WTC11 (cell line): ENCODE measurements at regions of chr10 and their contacts with region 1.

Region 1: DNA sequence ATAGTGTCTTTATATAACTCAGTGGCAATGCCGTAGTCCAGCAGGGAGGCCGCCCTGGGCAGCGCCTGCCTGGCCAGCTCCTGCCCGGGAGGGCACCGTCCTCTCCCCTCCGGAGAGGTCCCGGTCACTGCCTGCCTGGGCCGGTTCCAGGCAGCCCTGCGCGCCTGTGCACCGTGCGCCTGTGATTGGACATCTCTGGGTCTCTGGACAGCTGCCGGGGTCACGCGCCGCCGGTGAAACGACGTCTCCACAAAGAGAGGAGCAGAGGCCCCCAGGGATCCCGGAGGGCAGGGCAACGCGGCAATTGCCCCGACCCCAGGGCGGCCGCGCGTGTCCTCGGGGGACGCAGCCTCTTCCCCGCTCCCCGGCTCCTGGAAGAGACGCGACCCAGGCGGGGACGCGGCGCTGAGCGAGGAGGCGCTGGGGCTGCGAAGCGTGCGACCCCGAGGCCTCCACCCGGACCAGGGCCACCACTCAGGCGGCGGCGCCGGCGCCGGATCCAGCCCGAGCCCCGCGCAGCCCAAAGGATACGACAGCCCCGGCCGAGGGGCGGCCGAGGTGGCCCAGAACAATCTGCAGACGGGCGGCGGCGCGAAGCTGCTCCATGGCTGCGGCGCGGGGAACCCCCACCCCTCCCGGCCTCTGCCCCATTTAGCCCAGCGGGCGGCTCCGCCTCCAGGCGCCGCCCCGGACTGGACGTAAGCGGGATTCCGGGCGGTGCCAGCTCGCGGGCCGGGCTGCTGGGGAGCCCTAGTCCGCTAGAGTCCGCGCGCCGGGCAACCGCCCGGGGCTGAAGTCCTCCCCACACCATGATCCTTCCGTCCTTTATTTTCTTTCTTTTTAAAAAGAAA is at the start of gene PHYH:
- DNase-seq: peak; percentile 81
- ATAC-seq: peak; percentile 70
- H3K4me3 Mint-ChIP-seq: peak within 1 kb of the TSS; percentile 69
- H3K27ac Mint-ChIP-seq: peak within 1 kb of the TSS; percentile 66
- H3K4me1 Mint-ChIP-seq: peaks cover 13% of the 10 kb centered on the region
- H3K27me3 Mint-ChIP-seq: peaks cover 13% of the 10 kb centered on the region; the same call in 1 of the 2 replicates
- CTCF ChIP-seq: no peak
- total RNA-seq, gene PHYH: 22.5 to 35.1 TPM (median 32.0 TPM) in 3 replicates

Region 2: GRCh38 chr10:13160934-13161856 is 138.5 kb before region 1 on chr10 and contains the start of gene MCM10:
- CTCF ChIA-PET with region 1: interaction called, 15 read pairs
- POLR2A ChIA-PET with region 1: interaction called, 3 read pairs
- DNase-seq: peak; percentile 99
- ATAC-seq: peak; percentile 99
- H3K4me3 Mint-ChIP-seq: peak within 1 kb of the TSS; percentile 79
- H3K27ac Mint-ChIP-seq: peak within 1 kb of the TSS; percentile 36
- H3K4me1 Mint-ChIP-seq: peaks cover 10% of the 10 kb centered on the region
- H3K27me3 Mint-ChIP-seq: no peaks in the 10 kb centered on the region; the same call in 1 of the 2 replicates
- CTCF ChIP-seq: peak; percentile 84
- total RNA-seq, gene MCM10: 40.7 to 44.3 TPM (median 42.4 TPM) in 3 replicates

Region 3: GRCh38 chr10:13219685-13220670 is 79.7 kb before region 1 on chr10:
- CTCF ChIA-PET with region 1: interaction called, 18 read pairs
- POLR2A ChIA-PET with region 1: no interaction called
- DNase-seq: peak; percentile 53
- ATAC-seq: peak; percentile 90
- H3K4me3 Mint-ChIP-seq: no peak overlapping the region
- H3K27ac Mint-ChIP-seq: peak overlapping the region; percentile 68; the same call in 1 of the 2 replicates
- H3K4me1 Mint-ChIP-seq: peaks cover 11% of the 10 kb centered on the region
- H3K27me3 Mint-ChIP-seq: no peaks in the 10 kb centered on the region
- CTCF ChIP-seq: no peak

Region 4: GRCh38 chr10:13311177-13311575 is 11.5 kb after region 1 on chr10:
- CTCF ChIA-PET with region 1: interaction called, 13 read pairs
- POLR2A ChIA-PET with region 1: no interaction called
- DNase-seq: no peak
- ATAC-seq: no peak
- H3K4me3 Mint-ChIP-seq: no peak overlapping the region
- H3K27ac Mint-ChIP-seq: no peak overlapping the region
- H3K4me1 Mint-ChIP-seq: peaks cover 12% of the 10 kb centered on the region
- H3K27me3 Mint-ChIP-seq: no peaks in the 10 kb centered on the region
- CTCF ChIP-seq: no peak

Region 5: GRCh38 chr10:13348216-13349017 is 48.8 kb after region 1 on chr10 and contains the start of gene SEPHS1:
- CTCF ChIA-PET with region 1: interaction called, 57 read pairs
- POLR2A ChIA-PET with region 1: interaction called, 26 read pairs
- DNase-seq: peak; percentile 81
- ATAC-seq: peak; percentile 25
- H3K4me3 Mint-ChIP-seq: peak within 1 kb of the TSS; percentile 94
- H3K27ac Mint-ChIP-seq: peak within 1 kb of the TSS; percentile 100
- H3K4me1 Mint-ChIP-seq: peaks cover 71% of the 10 kb centered on the region
- H3K27me3 Mint-ChIP-seq: no peaks in the 10 kb centered on the region; the same call in 1 of the 2 replicates
- CTCF ChIP-seq: no peak
- total RNA-seq, gene SEPHS1: 501 to 509 TPM (median 501 TPM) in 3 replicates